PC-9 (cell line): ENCODE measurements at regions of chr11 and their contacts with region 1.

Region 1: DNA sequence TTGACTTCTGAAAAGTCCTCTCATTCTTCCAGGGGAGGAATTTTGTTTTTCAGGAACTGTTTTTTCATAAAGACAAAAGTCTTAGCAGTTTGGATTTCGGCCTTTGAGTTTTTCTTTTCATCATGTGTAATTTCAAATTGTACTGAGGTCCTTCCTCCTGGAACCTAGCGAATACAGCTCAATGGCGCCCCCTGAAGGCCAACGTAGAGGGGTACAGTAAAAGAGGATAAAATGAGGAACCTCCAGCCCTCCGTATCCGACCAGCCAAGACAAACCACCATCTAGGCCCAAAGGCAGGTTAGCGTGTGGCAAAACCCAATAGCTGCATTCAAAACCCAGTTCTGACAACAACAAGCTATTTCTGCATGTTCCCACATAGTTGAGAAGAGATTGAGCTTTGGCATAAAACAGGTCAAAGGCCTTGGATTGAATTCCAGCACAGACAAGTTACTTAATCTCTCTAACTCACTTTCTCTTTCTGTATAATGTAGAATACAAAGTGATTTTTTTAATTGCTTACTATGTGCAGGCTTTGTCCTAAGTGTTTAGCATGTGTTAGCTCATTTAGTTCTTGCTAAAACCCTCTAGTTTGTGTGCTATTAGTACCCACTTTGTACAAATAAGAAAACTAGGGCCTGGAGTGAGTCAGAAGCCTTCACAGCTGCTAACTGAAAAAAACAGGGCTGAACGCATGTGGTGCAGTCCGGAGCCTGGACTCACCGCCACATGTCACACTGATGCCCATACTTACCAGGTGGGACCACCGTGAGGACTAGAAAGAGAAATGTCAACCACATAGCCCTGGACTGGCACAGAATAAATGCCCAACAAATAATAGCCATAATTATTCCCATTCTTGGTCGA is 43.2 kb upstream of the ETS1 start:
- DNase-seq: peak; percentile 60 to 73
- H3K4me3 ChIP-seq: no peak overlapping the region
- H3K27ac ChIP-seq: no peak overlapping the region
- H3K4me1 ChIP-seq: peaks cover 9% of the 10 kb centered on the region
- H3K27me3 ChIP-seq: no peaks in the 10 kb centered on the region
- CTCF ChIP-seq: peak; percentile 93

Region 2: GRCh38 chr11:128039140-128040021 is 591.2 kb before region 1 on chr11:
- CTCF ChIA-PET with region 1: no interaction called
- POLR2A ChIA-PET with region 1: no interaction called
- intact Hi-C with region 1: loop called (anchors 1 kb)
- DNase-seq: peak in 1 of 2 experiments; percentile 45
- H3K4me3 ChIP-seq: no peak overlapping the region
- H3K27ac ChIP-seq: no peak overlapping the region
- H3K4me1 ChIP-seq: no peaks in the 10 kb centered on the region
- H3K27me3 ChIP-seq: no peaks in the 10 kb centered on the region
- CTCF ChIP-seq: no peak

Region 3: DNA sequence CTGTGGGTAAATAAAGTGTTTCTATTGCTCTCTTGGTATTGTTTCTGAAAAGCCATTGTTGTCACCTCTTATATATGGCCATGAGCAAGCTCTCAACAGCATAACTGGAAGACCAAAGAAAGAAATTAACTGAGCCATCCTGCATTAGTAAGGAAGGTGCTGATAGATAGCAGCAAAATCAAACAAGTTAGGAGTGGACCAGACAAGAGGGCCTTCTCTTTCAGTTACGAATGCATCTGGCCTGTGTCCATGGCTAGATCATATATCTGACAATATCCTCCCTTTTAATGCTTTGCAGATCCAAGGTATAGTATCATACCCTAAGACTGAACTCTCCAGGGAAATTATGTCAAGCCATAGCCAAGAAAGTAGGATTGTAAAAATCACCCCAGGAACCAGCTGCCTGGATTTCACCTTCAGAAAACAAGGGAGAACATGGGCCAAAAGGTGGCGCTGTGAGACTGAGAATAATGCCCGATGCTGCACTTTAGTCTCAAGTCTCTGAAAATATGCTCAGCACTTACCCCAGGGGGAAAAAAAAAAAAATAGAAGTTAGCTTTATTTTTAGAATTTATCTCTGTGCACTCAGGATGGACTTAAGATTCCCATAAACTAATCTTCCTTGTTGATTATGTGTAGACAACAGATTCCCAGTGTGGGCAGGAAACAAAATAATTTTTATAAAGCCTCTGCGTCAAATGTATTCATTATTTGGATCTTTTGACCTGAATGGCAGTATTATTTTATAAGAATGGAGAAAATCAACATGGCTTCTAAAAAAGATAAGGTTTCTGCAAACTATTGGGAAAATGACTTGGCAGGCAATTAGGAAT is 458.3 kb before region 1 on chr11:
- CTCF ChIA-PET with region 1: interaction called, 6 read pairs
- POLR2A ChIA-PET with region 1: no interaction called
- intact Hi-C with region 1: loop called (anchors 1 kb)
- DNase-seq: peak; percentile 57 to 77
- H3K4me3 ChIP-seq: no peak overlapping the region
- H3K27ac ChIP-seq: no peak overlapping the region
- H3K4me1 ChIP-seq: peaks cover 7% of the 10 kb centered on the region; the same call in 1 of the 2 replicates
- H3K27me3 ChIP-seq: no peaks in the 10 kb centered on the region
- CTCF ChIP-seq: peak; percentile 89

Region 4: DNA sequence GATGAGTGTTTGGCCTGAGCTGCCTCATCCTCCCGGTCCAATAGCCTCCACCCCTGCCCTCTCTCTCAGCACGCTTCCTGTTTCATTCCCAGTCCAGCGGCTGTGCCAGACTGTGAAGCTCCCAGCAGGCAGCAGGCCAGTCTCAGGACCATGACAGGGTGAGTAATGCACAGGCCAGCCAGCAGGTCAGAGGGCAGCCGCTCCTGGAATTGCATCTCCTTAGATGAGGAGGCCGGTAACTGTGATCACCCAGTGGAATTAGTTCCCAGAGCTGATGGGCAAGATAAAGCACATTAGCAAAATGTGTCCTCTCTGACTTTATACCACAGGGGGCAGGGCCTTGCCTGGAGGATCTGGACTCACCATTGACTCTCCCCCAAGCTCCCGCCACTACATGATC is 294.4 kb before region 1 on chr11:
- CTCF ChIA-PET with region 1: interaction called, 3 read pairs
- POLR2A ChIA-PET with region 1: no interaction called
- intact Hi-C with region 1: loop called (anchors 1 kb)
- DNase-seq: peak; percentile 88 to 98
- H3K4me3 ChIP-seq: no peak overlapping the region
- H3K27ac ChIP-seq: 0 out of 2 replicates have a peak overlapping the region, but pooled peaks have one; percentile 40
- H3K4me1 ChIP-seq: peaks cover 19% of the 10 kb centered on the region
- H3K27me3 ChIP-seq: no peaks in the 10 kb centered on the region
- CTCF ChIP-seq: peak; percentile 22; the same call in 1 of the 2 replicates

Region 5: GRCh38 chr11:128686021-128686741 is 55.6 kb after region 1 on chr11:
- CTCF ChIA-PET with region 1: no interaction called
- POLR2A ChIA-PET with region 1: interaction called, 24 read pairs
- intact Hi-C with region 1: no loop called
- DNase-seq: no peak
- H3K4me3 ChIP-seq: no peak overlapping the region
- H3K27ac ChIP-seq: no peak overlapping the region
- H3K4me1 ChIP-seq: no peaks in the 10 kb centered on the region
- H3K27me3 ChIP-seq: peaks cover 61% of the 10 kb centered on the region
- CTCF ChIP-seq: no peak

Region 6: DNA sequence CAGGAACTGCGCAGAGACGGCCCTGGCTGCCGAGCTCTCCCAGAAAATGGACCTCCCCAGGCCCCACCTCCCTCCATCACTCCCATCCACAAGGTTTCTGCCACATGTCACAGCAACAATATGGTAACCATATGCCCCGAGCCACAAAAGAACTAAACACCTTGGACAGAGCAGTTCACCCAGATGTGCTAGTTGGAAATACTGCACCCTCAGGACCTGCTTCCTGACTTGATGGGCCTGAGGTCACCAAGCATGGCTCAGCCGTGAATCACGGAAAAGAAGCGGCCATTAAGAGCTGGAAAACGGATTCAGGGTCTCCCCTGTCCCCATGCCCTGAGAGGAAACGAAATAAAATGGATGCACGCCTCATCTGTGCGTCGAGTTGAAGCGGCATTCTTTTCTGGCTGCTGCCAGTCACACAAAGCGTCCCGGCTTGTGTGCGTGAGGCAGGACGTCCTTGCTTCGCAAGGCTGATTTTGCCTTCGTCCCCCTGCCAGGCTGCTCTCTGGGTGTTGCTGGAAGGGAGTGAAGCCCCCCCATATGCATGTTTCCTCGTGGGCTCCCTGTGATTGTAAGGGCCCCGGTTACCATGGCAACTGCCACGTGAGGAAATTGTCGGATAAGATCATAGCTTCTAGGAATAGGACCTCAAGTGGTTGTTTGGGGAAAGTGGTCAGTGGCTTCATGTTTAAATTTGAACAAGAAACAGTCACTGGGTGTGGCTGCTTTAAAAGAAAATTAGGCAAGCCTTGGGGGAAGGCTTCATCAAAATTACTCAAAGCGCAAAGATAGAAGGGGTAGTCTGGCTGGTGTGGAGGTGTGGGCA is 114.9 kb after region 1 on chr11:
- CTCF ChIA-PET with region 1: no interaction called
- POLR2A ChIA-PET with region 1: no interaction called
- intact Hi-C with region 1: no loop called
- DNase-seq: no peak
- H3K4me3 ChIP-seq: no peak overlapping the region
- H3K27ac ChIP-seq: no peak overlapping the region
- H3K4me1 ChIP-seq: no peaks in the 10 kb centered on the region
- H3K27me3 ChIP-seq: peaks cover 14% of the 10 kb centered on the region
- CTCF ChIP-seq: no peak

Region 7: DNA sequence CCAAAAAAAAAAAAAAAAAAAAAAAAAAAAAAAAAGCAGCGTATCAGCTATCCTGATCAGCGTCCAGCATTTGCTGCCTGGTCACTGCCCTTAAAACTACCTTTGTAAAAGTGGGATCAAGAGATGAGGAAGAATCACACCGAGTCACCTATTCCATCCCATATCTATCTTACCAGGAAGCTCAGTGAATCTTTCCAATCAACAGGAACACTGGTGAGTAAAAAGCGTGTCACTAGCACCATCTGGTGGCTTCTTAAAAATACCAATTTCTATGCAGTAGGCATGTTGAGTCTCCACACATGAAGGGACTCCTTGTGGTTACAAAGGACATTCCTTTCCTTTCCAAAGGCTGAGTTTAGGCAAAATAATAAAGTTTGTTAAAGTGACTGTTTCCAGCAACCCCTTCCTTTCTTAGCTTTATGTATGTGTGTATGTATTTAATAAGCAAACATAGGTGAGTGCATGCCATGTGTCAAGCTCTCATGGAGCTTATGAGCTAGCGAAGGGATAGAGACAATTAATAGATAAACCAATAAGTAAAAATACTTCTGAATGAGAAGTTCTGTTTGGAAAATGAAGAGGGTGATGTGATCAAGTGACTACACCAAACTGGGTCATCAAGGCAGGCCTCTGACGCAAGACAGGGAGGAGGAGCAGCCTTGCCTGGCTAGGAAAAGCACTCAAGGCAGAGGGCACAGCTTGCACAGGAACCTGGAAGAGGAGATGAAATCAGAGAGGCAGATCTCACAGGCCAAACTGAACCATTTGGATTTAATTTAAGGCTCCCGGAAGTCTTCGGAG is 326.0 kb after region 1 on chr11:
- CTCF ChIA-PET with region 1: interaction called, 9 read pairs
- POLR2A ChIA-PET with region 1: no interaction called
- intact Hi-C with region 1: loop called (anchors 5 kb)
- DNase-seq: peak; percentile 50 to 69
- H3K4me3 ChIP-seq: no peak overlapping the region
- H3K27ac ChIP-seq: no peak overlapping the region
- H3K4me1 ChIP-seq: no peaks in the 10 kb centered on the region
- H3K27me3 ChIP-seq: no peaks in the 10 kb centered on the region
- CTCF ChIP-seq: peak; percentile 82